ENCODE measurements at regions of chr12 and their contacts with region 1.

Region 1: GRCh38 chr12:75526655-75527511 is 15.5 kb upstream of the KRR1 start:
- DNase-seq: peak; percentile 70
- H3K4me3 ChIP-seq: no peak overlapping the region
- H3K27ac ChIP-seq: no peak overlapping the region
- H3K4me1 ChIP-seq: no peaks in the 10 kb centered on the region
- H3K27me3 ChIP-seq: no peaks in the 10 kb centered on the region
- CTCF ChIP-seq: peak; percentile 38 to 49
- POLR2A ChIP-seq: no peak

Region 2: GRCh38 chr12:74552201-74552600 is 974.7 kb before region 1 on chr12:
- CTCF ChIA-PET with region 1: no interaction called
- POLR2A ChIA-PET with region 1: no interaction called
- dilution Hi-C with region 1: no loop called
- intact Hi-C with region 1: no loop called
- DNase-seq: no peak
- H3K4me3 ChIP-seq: no peak overlapping the region
- H3K27ac ChIP-seq: no peak overlapping the region
- H3K4me1 ChIP-seq: no peaks in the 10 kb centered on the region
- H3K27me3 ChIP-seq: no peaks in the 10 kb centered on the region
- CTCF ChIP-seq: no peak
- POLR2A ChIP-seq: no peak

Region 3: DNA sequence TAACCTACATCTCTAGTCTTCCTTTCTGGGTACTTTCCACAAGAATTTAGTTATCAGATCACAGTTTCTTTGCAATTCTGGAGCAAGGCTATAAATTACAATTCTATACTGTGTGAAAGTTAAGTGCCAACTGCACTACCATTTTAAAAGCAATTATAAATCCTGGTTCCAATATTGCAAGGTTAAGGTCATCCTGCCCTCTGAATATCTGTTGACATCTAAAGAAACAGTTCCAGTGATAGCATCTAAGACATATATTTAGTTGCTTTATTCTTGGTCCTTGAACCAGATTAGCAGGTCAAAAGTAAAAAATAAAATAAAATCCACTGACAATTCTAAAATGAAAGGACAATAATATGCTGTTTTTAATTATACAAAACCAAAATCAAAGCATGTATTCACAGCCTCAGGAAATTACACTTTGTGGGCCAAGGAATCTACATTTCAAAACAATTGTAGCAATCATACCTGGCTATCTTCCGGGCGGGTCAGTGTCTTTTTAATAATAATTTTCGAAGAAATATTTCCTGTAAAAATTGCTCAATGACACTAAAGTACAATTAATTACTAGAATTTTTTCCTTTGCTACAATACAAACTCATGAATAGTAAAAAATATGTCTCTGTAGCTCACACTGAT is 655.0 kb before region 1 on chr12:
- CTCF ChIA-PET with region 1: no interaction called
- POLR2A ChIA-PET with region 1: no interaction called
- dilution Hi-C with region 1: no loop called
- intact Hi-C with region 1: no loop called
- DNase-seq: no peak
- H3K4me3 ChIP-seq: no peak overlapping the region
- H3K27ac ChIP-seq: no peak overlapping the region
- H3K4me1 ChIP-seq: no peaks in the 10 kb centered on the region
- H3K27me3 ChIP-seq: no peaks in the 10 kb centered on the region
- CTCF ChIP-seq: no peak
- POLR2A ChIP-seq: no peak

Region 4: GRCh38 chr12:75560167-75560566 is 33.3 kb after region 1 on chr12:
- CTCF ChIA-PET with region 1: interaction called, 14 read pairs
- POLR2A ChIA-PET with region 1: no interaction called
- dilution Hi-C with region 1: no loop called
- intact Hi-C with region 1: no loop called
- DNase-seq: peak; percentile 70
- H3K4me3 ChIP-seq: no peak overlapping the region
- H3K27ac ChIP-seq: no peak overlapping the region
- H3K4me1 ChIP-seq: peaks cover 12% of the 10 kb centered on the region
- H3K27me3 ChIP-seq: no peaks in the 10 kb centered on the region
- CTCF ChIP-seq: peak in 1 of 2 donors; percentile 40
- POLR2A ChIP-seq: no peak

Region 5: DNA sequence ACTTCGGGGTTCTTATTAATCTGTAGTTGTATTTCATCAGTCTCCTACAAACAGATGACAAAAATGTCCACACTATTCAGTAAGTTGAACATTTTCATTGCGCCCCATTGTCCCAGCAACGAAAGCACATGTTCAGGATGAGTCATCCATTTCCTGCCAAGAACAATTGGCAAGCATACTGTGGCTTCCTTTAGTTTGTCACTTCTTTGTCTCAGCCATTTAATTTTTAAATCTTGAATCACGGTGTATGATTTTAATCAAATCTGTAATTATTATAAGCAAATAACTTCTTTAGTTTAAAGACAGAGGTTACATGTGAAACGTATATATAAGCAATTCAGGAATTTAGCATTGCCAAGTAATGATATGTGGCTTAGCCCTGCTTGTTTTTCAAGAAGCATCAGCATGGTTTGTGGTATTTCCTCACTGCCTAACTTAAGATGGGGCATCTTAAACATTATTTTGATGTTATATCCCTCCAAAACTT is 195.9 kb after region 1 on chr12:
- CTCF ChIA-PET with region 1: interaction called, 5 read pairs
- POLR2A ChIA-PET with region 1: no interaction called
- dilution Hi-C with region 1: no loop called
- intact Hi-C with region 1: loop called (anchors 5 kb)
- DNase-seq: peak; percentile 95
- H3K4me3 ChIP-seq: no peak overlapping the region
- H3K27ac ChIP-seq: peak overlapping the region; percentile 92
- H3K4me1 ChIP-seq: peaks cover 46% of the 10 kb centered on the region
- H3K27me3 ChIP-seq: no peaks in the 10 kb centered on the region
- CTCF ChIP-seq: no peak
- POLR2A ChIP-seq: no peak

Region 6: GRCh38 chr12:75848431-75848925 is 321.6 kb after region 1 on chr12:
- CTCF ChIA-PET with region 1: interaction called, 3 read pairs
- POLR2A ChIA-PET with region 1: no interaction called
- dilution Hi-C with region 1: no loop called
- intact Hi-C with region 1: loop called (anchors 10 kb)
- DNase-seq: peak; percentile 62
- H3K4me3 ChIP-seq: no peak overlapping the region
- H3K27ac ChIP-seq: peak overlapping the region; percentile 1
- H3K4me1 ChIP-seq: peaks cover 25% of the 10 kb centered on the region
- H3K27me3 ChIP-seq: no peaks in the 10 kb centered on the region
- CTCF ChIP-seq: no peak
- POLR2A ChIP-seq: no peak

Region 7: DNA sequence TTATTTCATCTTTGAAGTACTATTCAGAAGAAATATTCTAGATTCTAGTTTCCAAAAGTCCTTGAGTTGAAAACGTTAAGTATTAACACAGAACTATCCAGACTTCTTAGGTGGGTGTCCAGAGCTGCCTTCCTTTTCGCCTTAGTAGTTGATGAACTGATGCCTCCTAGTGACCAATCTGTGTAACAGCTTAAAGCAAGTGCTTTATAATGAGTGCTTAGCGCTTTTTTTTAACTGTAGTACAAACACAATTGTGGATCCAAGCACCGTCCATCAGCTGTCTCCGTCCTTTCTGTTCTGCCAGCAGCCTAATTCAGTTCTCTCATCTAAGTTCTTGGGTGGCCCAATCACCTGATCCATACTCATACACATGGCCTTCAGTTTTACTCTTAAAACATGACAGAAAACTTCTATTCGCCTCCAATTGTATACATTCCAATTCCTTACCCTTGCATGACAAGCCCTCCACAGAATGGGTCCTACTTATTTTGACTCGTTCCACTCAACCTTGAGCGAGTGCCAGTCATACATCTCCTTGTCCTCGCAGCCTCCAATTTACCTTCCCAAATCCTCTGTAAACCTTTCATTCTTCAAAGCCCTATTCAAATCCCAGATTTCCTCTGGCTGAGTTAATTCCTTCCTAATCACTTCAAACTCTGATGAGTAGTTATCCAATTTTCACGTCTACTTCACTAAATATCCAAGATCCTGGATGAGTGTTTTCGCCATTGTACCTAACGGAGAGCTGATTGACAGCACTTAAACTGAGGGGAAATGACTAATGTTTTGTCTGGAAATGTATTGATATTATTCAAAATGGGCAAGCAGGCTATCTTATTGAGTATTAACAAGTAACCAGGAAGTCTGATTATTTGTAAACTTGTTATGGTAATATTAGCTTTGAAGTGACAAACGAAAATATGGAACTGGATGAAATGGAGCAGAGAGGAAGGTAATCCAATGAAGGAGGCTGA is 510.5 kb after region 1 on chr12:
- CTCF ChIA-PET with region 1: interaction called, 95 read pairs
- POLR2A ChIA-PET with region 1: interaction called, 8 read pairs
- dilution Hi-C with region 1: loop called (anchors 25 kb)
- intact Hi-C with region 1: loop called (anchors 1 kb)
- DNase-seq: peak; percentile 87
- H3K4me3 ChIP-seq: peak overlapping the region in 1 of 3 experiments; percentile 45
- H3K27ac ChIP-seq: peak overlapping the region; percentile 88
- H3K4me1 ChIP-seq: peaks cover 26% of the 10 kb centered on the region
- H3K27me3 ChIP-seq: no peaks in the 10 kb centered on the region
- CTCF ChIP-seq: peak; percentile 68 to 79
- POLR2A ChIP-seq: peak; percentile 60

Measured in endothelial cell of umbilical vein (primary cell).